ENCODE measurements at regions of chr16 and their contacts with region 1.

Region 1: DNA sequence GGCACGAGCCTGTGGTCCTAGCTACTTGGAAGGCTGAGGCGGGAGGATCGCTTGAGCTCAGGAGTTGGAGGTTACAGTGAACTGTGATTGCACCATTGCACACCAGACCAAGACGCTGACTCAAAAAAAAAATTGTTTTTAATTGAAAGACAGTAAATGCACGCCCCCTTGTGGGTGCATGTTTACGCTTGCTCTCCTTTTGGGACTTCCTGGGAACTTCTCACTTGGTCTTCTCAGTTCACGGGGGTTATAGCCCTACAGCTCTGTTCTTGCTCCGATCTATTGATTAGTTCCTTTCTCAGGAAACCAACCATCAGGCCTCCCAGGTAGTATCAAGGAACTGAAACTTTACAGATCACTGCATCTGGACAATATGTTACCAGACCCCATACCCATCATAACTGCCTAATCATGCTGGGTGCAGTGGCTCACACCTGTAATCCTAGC is 14.2 kb upstream of the RIPOR1 start:
- DNase-seq: peak; percentile 69
- H3K4me3 Mint-ChIP-seq: no peak overlapping the region
- H3K27ac Mint-ChIP-seq: no peak overlapping the region
- H3K4me1 Mint-ChIP-seq: peaks cover 5% of the 10 kb centered on the region
- H3K27me3 Mint-ChIP-seq: peaks cover 2% of the 10 kb centered on the region

Region 2: GRCh38 chr16:67499106-67499505 is 15.3 kb before region 1 on chr16:
- intact Hi-C with region 1: loop called (anchors 1 kb)
- DNase-seq: no peak
- H3K4me3 Mint-ChIP-seq: no peak overlapping the region
- H3K27ac Mint-ChIP-seq: no peak overlapping the region
- H3K4me1 Mint-ChIP-seq: peaks cover 19% of the 10 kb centered on the region
- H3K27me3 Mint-ChIP-seq: no peaks in the 10 kb centered on the region